CD8-positive, alpha-beta T cell (primary cell): ENCODE measurements at regions of chr11 and their contacts with region 1.

Region 1: DNA sequence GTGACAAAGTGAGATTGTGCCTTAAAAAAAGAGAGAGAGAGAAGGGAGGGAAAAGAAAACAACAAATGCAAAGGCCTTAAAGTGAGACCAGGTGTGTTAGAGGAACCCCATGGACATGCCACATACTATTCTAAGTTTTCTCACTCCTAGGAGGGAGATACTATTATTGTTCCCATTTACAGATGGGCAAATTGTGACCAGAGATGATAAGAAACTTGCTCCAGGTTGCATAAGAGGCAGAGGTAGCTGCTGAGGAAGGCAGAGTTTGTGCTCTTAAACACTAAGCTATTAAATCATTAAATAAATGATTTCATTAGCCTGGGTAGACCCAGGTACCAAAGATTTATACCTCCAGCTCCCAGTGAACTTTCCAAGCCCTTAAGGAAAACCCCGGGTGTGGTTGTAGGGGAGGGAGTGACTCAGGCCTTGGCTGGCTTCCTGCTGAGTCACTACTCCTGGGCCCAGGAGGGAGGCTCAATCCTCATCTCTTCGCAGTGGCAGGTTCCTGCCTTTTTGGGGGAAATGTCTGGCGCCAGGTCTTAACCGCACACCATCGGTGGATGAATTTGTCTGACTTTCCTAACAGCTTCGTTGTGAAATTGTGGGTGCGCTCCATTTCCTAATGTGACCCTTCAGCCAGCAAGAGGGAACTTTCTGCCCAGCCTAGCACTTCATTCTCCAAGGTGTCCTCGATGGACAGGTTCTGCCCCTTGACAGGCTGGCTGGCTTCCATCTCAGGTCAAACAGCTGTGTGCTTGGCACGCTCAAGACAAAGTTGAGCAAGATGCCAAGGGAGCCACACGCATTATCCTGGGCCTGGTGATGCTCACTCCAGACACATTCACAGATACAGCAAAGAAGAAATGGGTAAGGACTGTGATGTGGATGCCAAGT is 33.4 kb upstream of the PTPRJ start:
- DNase-seq: peak in 2 of 9 experiments; percentile 17 to 33
- ATAC-seq: no peak
- H3K4me3 ChIP-seq: no peak overlapping the region
- H3K4me3 Mint-ChIP-seq: no peak overlapping the region
- H3K27ac ChIP-seq: no peak overlapping the region
- H3K27ac Mint-ChIP-seq: no peak overlapping the region
- H3K4me1 ChIP-seq: peaks cover 22% of the 10 kb centered on the region
- H3K4me1 Mint-ChIP-seq: peaks cover 30% of the 10 kb centered on the region
- H3K27me3 ChIP-seq: no peaks in the 10 kb centered on the region
- H3K27me3 Mint-ChIP-seq: no peaks in the 10 kb centered on the region
- CTCF ChIP-seq: no peak

Region 2: DNA sequence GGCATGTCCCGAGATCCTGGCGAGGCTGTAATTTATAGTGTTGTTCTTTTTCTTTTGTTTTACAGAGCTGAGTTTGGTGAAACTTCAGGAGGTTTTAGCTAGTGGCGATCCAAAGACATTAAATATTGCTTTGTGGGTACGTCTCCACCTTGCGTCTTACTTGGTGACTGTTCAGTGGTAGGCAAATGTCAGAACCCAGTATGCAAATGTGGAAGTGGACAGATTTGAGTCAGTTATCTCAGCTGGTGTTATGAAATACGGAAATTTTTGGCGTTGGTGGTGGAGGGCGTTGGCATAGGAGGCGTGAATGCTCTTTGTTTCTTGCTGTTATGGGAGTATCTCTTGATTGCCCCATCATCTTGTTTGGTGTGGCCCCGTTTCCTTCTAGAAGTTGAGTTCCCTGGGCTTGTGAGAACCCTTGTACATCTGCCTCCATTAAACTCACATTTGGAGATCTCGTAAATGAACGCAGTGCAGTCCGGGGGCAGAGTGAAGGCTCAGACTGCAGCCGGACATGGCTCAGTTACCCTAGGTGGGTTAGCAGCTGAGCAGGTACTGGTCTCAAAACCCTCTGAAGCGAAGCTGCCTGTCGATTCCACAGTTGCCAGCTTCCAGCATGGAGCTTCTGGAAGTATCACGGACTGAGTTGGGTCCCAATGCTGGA is 73.3 kb after region 1 on chr11:
- CTCF ChIA-PET with region 1: no interaction called
- POLR2A ChIA-PET with region 1: interaction called, 4 read pairs
- intact Hi-C with region 1: loop called in 1 of 2 experiments (anchors 5 kb)
- DNase-seq: peak in 2 of 9 experiments; percentile 75 to 83
- ATAC-seq: peak; percentile 32
- H3K4me3 ChIP-seq: no peak overlapping the region
- H3K4me3 Mint-ChIP-seq: peak overlapping the region; percentile 22
- H3K27ac ChIP-seq: peak overlapping the region in 1 of 2 experiments; percentile 91
- H3K27ac Mint-ChIP-seq: peak overlapping the region; percentile 80
- H3K4me1 ChIP-seq: peaks cover 50% of the 10 kb centered on the region
- H3K4me1 Mint-ChIP-seq: peaks cover 62% of the 10 kb centered on the region
- H3K27me3 ChIP-seq: no peaks in the 10 kb centered on the region
- H3K27me3 Mint-ChIP-seq: no peaks in the 10 kb centered on the region
- CTCF ChIP-seq: no peak